ENCODE measurements at regions of chr6 and their contacts with region 1.

Region 1: DNA sequence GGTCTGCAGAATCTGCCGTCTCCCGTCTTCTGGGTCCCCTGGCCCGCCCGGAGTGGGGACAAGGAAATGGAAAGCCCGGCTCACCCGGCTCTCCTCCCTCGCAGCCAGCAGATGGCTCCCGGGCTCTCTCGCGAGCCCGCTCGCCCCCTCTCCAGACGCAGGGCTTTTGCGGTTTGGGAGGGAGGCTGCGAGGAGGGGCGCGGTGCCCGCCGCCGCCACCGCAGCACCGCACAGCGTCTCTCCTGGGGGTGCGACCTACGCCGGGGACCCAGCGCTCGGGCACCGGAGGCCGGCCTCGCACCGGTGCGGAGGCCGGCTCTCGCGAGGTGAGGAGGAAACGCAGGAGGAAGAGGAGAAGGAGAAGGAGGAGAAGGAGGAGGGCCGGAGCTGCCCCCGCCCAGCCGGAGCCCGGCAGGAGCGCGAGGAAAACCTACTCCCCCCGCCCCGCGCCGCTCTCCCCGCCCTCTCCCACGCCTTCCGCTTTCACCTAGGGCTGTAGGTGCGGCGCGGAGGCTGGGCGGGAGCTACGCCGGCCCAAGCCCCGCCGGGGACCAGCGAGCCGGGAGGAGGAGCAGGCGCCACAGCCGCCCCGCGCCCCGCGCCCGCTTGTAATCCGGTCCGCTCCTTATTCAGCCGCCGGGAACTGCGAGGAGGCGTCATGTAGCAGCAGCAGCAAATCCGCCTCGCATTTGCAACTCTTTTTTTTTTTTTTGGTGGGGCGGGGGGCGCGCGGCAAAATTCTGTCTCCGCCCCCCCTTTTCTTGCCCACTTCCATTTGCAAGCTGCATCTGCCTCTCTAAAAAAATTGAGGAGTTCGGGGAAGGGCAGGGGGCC is at the start of gene CARMIL1:
- DNase-seq: peak; percentile 91 to 92 (median 91)
- ATAC-seq: peak; percentile 89 to 97 (median 92)
- H3K4me3 ChIP-seq: peak within 1 kb of the TSS; percentile 81 to 86 (median 82)
- H3K27ac ChIP-seq: peak within 1 kb of the TSS; percentile 18 to 65 (median 62)
- H3K4me1 ChIP-seq: peaks cover 0 to 7% (median 0%) of the 10 kb centered on the region in 4 donors
- H3K27me3 ChIP-seq: no peaks in the 10 kb centered on the region
- CTCF ChIP-seq: peak; percentile 50 to 78 (median 70)
- POLR2A ChIP-seq: peak; percentile 55
- total RNA-seq, gene CARMIL1: 3.3 to 8.6 (median 4.6) TPM

Region 2: GRCh38 chr6:24929242-24929641 is 349.9 kb before region 1 on chr6:
- intact Hi-C with region 1: no loop called
- DNase-seq: no peak
- ATAC-seq: peak in 3 of 4 donors; percentile 47 to 63 (median 49)
- H3K4me3 ChIP-seq: no peak overlapping the region
- H3K27ac ChIP-seq: no peak overlapping the region
- H3K4me1 ChIP-seq: no peaks in the 10 kb centered on the region
- H3K27me3 ChIP-seq: no peaks in the 10 kb centered on the region
- CTCF ChIP-seq: no peak
- POLR2A ChIP-seq: no peak

Region 3: GRCh38 chr6:25490018-25490801 is 211.1 kb after region 1 on chr6:
- intact Hi-C with region 1: loop called in 1 of 2 experiments (anchors 10 kb)
- DNase-seq: peak; percentile 75 to 83 (median 80)
- ATAC-seq: peak; percentile 99 to 100 (median 100)
- H3K4me3 ChIP-seq: no peak overlapping the region
- H3K27ac ChIP-seq: no peak overlapping the region
- H3K4me1 ChIP-seq: no peaks in the 10 kb centered on the region
- H3K27me3 ChIP-seq: no peaks in the 10 kb centered on the region
- CTCF ChIP-seq: peak; percentile 85 to 91 (median 88)
- POLR2A ChIP-seq: no peak